IMR-90 (cell line): ENCODE measurements at regions of chr5 and their contacts with region 1.

Region 1: DNA sequence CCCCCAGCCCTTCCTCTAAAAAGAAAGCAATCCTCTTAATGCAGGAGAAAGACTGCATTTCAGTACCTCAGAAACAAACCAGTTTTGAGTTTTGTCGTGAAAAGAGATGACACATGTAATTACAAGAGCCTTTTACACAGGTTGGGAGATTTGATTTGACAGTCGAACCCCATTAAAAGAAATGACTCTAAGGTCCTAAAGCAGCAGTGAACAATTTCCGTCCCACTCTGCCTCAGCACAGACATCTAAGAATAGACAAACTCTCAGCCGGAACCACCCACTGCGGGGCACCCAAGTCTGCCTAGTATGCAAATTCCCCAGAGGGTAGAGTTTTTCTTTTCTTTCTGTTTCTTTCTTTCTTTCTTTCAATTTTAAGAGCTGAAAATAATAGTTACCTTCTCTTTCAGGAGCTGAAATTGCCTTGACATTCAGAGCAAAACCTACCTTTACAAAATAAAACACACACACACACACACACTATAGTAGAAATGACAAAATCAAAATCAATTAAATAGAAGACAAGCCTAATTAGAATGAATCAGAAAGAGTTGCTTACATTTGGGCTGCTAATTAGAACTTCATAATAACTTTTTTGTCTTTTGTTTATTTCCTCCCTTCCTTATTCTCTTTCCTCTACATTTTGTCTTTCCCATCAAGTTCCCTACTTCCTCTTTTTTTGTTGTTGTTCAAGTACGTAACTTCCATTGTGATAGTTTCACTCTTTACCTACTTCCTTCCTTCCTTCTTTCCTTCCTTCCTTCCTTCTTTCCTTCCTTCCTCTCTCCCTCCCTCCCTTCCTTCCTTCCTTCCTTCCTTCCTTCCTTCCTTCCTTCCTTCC is 65.1 kb downstream of the BASP1 start:
- DNase-seq: no peak
- ATAC-seq: no peak
- H3K4me3 ChIP-seq: no peak overlapping the region
- H3K27ac ChIP-seq: no peak overlapping the region
- H3K4me1 ChIP-seq: no peaks in the 10 kb centered on the region
- H3K27me3 ChIP-seq: no peaks in the 10 kb centered on the region
- CTCF ChIP-seq: no peak
- POLR2A ChIP-seq: no peak
- RAD21 ChIP-seq: no peak

Region 2: GRCh38 chr5:17654617-17655016 is 372.1 kb after region 1 on chr5:
- CTCF ChIA-PET with region 1: no interaction called
- POLR2A ChIA-PET with region 1: no interaction called
- dilution Hi-C with region 1: no loop called
- in situ Hi-C with region 1: no loop called
- intact Hi-C with region 1: loop called (anchors 10 kb)
- DNase-seq: no peak
- ATAC-seq: no peak
- H3K4me3 ChIP-seq: no peak overlapping the region
- H3K27ac ChIP-seq: no peak overlapping the region
- H3K4me1 ChIP-seq: no peaks in the 10 kb centered on the region
- H3K27me3 ChIP-seq: no peaks in the 10 kb centered on the region
- CTCF ChIP-seq: no peak
- POLR2A ChIP-seq: no peak
- RAD21 ChIP-seq: no peak

Region 3: GRCh38 chr5:17882764-17883488 is 600.4 kb after region 1 on chr5:
- CTCF ChIA-PET with region 1: no interaction called
- POLR2A ChIA-PET with region 1: no interaction called
- dilution Hi-C with region 1: no loop called
- in situ Hi-C with region 1: no loop called
- intact Hi-C with region 1: no loop called
- DNase-seq: no peak
- ATAC-seq: no peak
- H3K4me3 ChIP-seq: no peak overlapping the region
- H3K27ac ChIP-seq: no peak overlapping the region
- H3K4me1 ChIP-seq: no peaks in the 10 kb centered on the region
- H3K27me3 ChIP-seq: no peaks in the 10 kb centered on the region
- CTCF ChIP-seq: no peak
- POLR2A ChIP-seq: no peak
- RAD21 ChIP-seq: no peak

Region 4: GRCh38 chr5:18113721-18114120 is 831.2 kb after region 1 on chr5:
- CTCF ChIA-PET with region 1: no interaction called
- POLR2A ChIA-PET with region 1: no interaction called
- dilution Hi-C with region 1: no loop called
- in situ Hi-C with region 1: no loop called
- intact Hi-C with region 1: loop called (anchors 10 kb)
- DNase-seq: peak; percentile 12
- ATAC-seq: no peak
- H3K4me3 ChIP-seq: no peak overlapping the region
- H3K27ac ChIP-seq: no peak overlapping the region
- H3K4me1 ChIP-seq: no peaks in the 10 kb centered on the region
- H3K27me3 ChIP-seq: no peaks in the 10 kb centered on the region
- CTCF ChIP-seq: peak; percentile 48
- POLR2A ChIP-seq: no peak
- RAD21 ChIP-seq: peak; percentile 56

Region 5: GRCh38 chr5:18305297-18305924 is 1022.9 kb after region 1 on chr5:
- CTCF ChIA-PET with region 1: no interaction called
- POLR2A ChIA-PET with region 1: no interaction called
- dilution Hi-C with region 1: no loop called
- in situ Hi-C with region 1: no loop called
- intact Hi-C with region 1: loop called (anchors 2 kb)
- DNase-seq: peak; percentile 39
- ATAC-seq: peak; percentile 90
- H3K4me3 ChIP-seq: no peak overlapping the region
- H3K27ac ChIP-seq: no peak overlapping the region
- H3K4me1 ChIP-seq: no peaks in the 10 kb centered on the region
- H3K27me3 ChIP-seq: no peaks in the 10 kb centered on the region
- CTCF ChIP-seq: peak; percentile 77
- POLR2A ChIP-seq: no peak
- RAD21 ChIP-seq: peak; percentile 81